ENCODE measurements at regions of chr3 and their contacts with region 1.

Region 1: GRCh38 chr3:56494686-56495322 is 26.5 kb upstream of the ERC2 start:
- DNase-seq: peak; percentile 21 to 69
- H3K4me3 ChIP-seq: no peak overlapping the region
- H3K27ac ChIP-seq: no peak overlapping the region
- H3K4me1 ChIP-seq: no peaks in the 10 kb centered on the region
- H3K27me3 ChIP-seq: no peaks in the 10 kb centered on the region
- CTCF ChIP-seq: peak; percentile 57 to 99 (median 99)
- EP300 ChIP-seq: no peak
- POLR2A ChIP-seq: no peak
- RAD21 ChIP-seq: peak; percentile 75 to 87

Region 2: GRCh38 chr3:56453011-56453410 is 41.8 kb before region 1 on chr3:
- CTCF ChIA-PET with region 1: interaction called, 10 read pairs
- POLR2A ChIA-PET with region 1: no interaction called
- DNase-seq: no peak
- H3K4me3 ChIP-seq: no peak overlapping the region
- H3K27ac ChIP-seq: no peak overlapping the region
- H3K4me1 ChIP-seq: no peaks in the 10 kb centered on the region
- H3K27me3 ChIP-seq: no peaks in the 10 kb centered on the region
- CTCF ChIP-seq: no peak
- EP300 ChIP-seq: no peak
- POLR2A ChIP-seq: no peak
- RAD21 ChIP-seq: no peak

Region 3: DNA sequence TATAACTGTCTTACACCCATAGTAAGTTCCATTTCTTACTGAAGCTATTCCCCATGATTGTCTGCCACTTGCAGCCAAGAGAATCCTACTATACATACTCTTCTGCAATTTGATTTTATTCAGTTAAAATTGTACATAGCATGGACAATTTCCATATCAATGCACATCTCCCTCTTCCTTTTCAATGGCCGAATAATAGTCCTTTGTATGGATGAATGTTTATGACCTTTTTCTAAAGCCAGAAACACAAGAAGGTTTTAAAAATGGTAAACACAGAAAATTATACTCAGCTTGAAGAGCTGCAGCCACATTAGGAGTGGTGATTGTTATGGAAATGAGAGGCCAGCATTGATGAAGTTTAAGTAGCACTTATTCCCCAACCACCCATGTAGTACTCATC is 18.0 kb before region 1 on chr3:
- CTCF ChIA-PET with region 1: interaction called, 33 read pairs
- POLR2A ChIA-PET with region 1: no interaction called
- DNase-seq: no peak
- H3K4me3 ChIP-seq: 0 out of 8 replicates have a peak overlapping the region, but pooled peaks of 1 of the 4 experiments have one; percentile 9
- H3K27ac ChIP-seq: no peak overlapping the region
- H3K4me1 ChIP-seq: peaks cover 0 to 4% (median 1%) of the 10 kb centered on the region in 4 experiments; a peak in 2 of 7 replicates
- H3K27me3 ChIP-seq: no peaks in the 10 kb centered on the region
- CTCF ChIP-seq: no peak
- EP300 ChIP-seq: no peak
- POLR2A ChIP-seq: no peak
- RAD21 ChIP-seq: no peak

Region 4: GRCh38 chr3:56484122-56484521 is 10.7 kb before region 1 on chr3:
- CTCF ChIA-PET with region 1: interaction called, 33 read pairs
- POLR2A ChIA-PET with region 1: no interaction called
- DNase-seq: no peak
- H3K4me3 ChIP-seq: no peak overlapping the region
- H3K27ac ChIP-seq: no peak overlapping the region
- H3K4me1 ChIP-seq: no peaks in the 10 kb centered on the region
- H3K27me3 ChIP-seq: no peaks in the 10 kb centered on the region
- CTCF ChIP-seq: no peak
- EP300 ChIP-seq: no peak
- POLR2A ChIP-seq: no peak
- RAD21 ChIP-seq: no peak